CD14-positive monocyte (primary cell): ENCODE measurements at regions of chr1 and their contacts with region 1.

Region 1: GRCh38 chr1:92515796-92516201 is 29.1 kb upstream of the GFI1 start:
- DNase-seq: no peak
- H3K4me3 ChIP-seq: no peak overlapping the region
- H3K4me3 Mint-ChIP-seq: no peak overlapping the region
- H3K27ac ChIP-seq: peak overlapping the region in 1 of 2 donors; percentile 43
- H3K27ac Mint-ChIP-seq: peak overlapping the region in 3 of 7 donors; percentile 6 to 64 (median 46)
- H3K4me1 ChIP-seq: peaks cover 11 to 17% of the 10 kb centered on the region in 2 donors
- H3K4me1 Mint-ChIP-seq: peaks cover 24% of the 10 kb centered on the region
- H3K27me3 ChIP-seq: no peaks in the 10 kb centered on the region
- H3K27me3 Mint-ChIP-seq: no peaks in the 10 kb centered on the region
- CTCF ChIP-seq: no peak

Region 2: GRCh38 chr1:92154934-92155333 is 360.9 kb before region 1 on chr1:
- intact Hi-C with region 1: loop called in 1 of 2 experiments (anchors 5 kb)
- DNase-seq: no peak
- H3K4me3 ChIP-seq: no peak overlapping the region
- H3K4me3 Mint-ChIP-seq: no peak overlapping the region
- H3K27ac ChIP-seq: no peak overlapping the region
- H3K27ac Mint-ChIP-seq: no peak overlapping the region
- H3K4me1 ChIP-seq: no peaks in the 10 kb centered on the region
- H3K4me1 Mint-ChIP-seq: no peaks in the 10 kb centered on the region
- H3K27me3 ChIP-seq: no peaks in the 10 kb centered on the region
- H3K27me3 Mint-ChIP-seq: no peaks in the 10 kb centered on the region
- CTCF ChIP-seq: no peak

Region 3: GRCh38 chr1:92447033-92447681 is 68.6 kb before region 1 on chr1:
- intact Hi-C with region 1: no loop called
- DNase-seq: no peak
- H3K4me3 ChIP-seq: no peak overlapping the region
- H3K4me3 Mint-ChIP-seq: no peak overlapping the region
- H3K27ac ChIP-seq: no peak overlapping the region
- H3K27ac Mint-ChIP-seq: no peak overlapping the region
- H3K4me1 ChIP-seq: no peaks in the 10 kb centered on the region
- H3K4me1 Mint-ChIP-seq: peaks cover 3% of the 10 kb centered on the region
- H3K27me3 ChIP-seq: no peaks in the 10 kb centered on the region
- H3K27me3 Mint-ChIP-seq: peaks cover 0 to 5% (median 2%) of the 10 kb centered on the region in 3 donors
- CTCF ChIP-seq: no peak

Region 4: GRCh38 chr1:92653617-92654381 is 138.0 kb after region 1 on chr1:
- intact Hi-C with region 1: no loop called
- DNase-seq: no peak
- H3K4me3 ChIP-seq: no peak overlapping the region
- H3K4me3 Mint-ChIP-seq: no peak overlapping the region
- H3K27ac ChIP-seq: no peak overlapping the region
- H3K27ac Mint-ChIP-seq: no peak overlapping the region
- H3K4me1 ChIP-seq: no peaks in the 10 kb centered on the region
- H3K4me1 Mint-ChIP-seq: no peaks in the 10 kb centered on the region
- H3K27me3 ChIP-seq: no peaks in the 10 kb centered on the region
- H3K27me3 Mint-ChIP-seq: peaks cover 0 to 3% (median 0%) of the 10 kb centered on the region in 3 donors
- CTCF ChIP-seq: no peak

Region 5: DNA sequence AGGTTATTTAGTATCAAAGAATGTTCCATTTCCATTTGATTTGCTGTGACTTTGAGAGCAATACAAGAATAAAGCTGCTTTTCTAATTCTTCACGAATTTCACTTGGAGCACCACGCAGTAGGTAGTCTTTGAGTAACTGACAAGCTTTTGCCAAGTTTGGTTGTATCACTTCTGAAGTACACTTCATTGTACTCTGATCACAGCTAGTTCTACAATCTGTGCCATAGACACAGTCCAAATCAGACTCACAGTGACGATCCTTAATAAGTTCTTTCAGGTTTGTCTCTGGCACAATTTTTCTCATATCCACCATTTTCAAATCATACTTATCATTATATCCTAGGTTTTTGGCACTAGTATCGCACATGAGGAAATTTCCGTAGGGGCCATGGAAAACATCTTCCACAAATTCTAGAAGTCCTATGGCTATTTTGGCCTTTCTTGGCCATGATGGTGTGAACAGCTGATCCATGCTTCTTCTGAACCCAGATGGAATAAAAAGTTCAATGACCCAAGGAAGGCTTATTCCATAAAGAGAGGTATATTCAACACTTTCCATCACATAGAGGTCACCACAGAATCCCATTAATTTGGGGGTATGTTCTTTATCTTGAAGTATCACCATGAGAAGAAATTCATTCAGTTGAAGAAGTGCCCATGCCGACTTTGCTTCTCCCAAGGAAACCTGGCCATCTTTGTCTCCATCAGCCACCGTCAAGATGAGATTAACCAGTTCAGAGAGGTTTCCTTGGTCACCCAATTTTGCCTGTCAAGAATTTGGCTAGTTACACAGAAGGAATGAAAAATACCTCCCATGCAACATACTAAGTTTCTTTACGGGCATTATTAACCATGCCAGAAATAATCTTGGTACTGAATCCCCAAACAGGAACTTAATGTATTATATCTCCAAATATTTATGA is 327.9 kb after region 1 on chr1:
- intact Hi-C with region 1: no loop called
- DNase-seq: no peak
- H3K4me3 ChIP-seq: no peak overlapping the region
- H3K4me3 Mint-ChIP-seq: no peak overlapping the region
- H3K27ac ChIP-seq: no peak overlapping the region
- H3K27ac Mint-ChIP-seq: peak overlapping the region in 1 of 7 donors; percentile 27
- H3K4me1 ChIP-seq: no peaks in the 10 kb centered on the region
- H3K4me1 Mint-ChIP-seq: no peaks in the 10 kb centered on the region
- H3K27me3 ChIP-seq: no peaks in the 10 kb centered on the region
- H3K27me3 Mint-ChIP-seq: no peaks in the 10 kb centered on the region
- CTCF ChIP-seq: no peak